Ascending aorta (tissue), 2 donors: ENCODE measurements at regions of chr6 and their contacts with region 1.

Region 1: DNA sequence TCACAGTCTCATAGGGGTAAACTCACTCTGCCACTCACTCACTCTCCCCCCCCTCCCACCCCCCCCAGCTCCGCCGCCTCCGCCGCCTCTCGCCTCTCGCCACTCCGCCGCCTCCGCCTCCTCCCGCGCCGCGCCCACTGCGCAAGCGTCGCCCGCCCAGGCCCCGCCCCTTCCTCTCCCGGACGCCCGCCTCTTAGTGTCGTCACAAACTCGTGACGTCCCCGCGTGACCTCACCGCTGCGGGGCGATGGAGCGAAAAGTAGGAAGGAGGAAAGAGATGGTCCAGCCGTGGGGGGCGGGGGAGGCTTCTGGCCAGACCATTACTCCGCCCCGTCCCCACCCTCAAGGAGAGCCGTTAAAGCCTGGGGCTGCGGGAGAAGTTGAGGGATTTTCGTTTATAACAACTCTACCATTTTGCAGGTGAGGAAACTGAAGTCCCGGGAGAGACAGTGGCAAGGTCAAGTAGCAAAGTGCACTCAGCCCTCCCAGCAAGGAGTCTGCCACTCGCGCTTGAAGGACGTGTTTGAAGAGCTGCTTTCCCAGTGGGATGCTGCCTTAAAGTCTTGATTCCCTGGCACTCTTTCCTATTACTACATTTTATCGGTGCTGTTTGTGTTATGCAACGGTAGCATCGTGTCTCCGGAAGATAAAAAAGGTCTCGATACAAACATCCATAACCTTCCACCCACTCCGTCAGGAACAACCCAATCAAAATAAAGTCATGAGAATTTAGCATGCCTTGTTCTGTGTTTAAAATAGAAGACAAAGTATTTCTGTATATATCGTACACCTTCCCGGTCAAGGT is at the start of gene ILRUN:
- DNase-seq: peak; percentile 89 to 98
- H3K4me3 ChIP-seq: peak within 1 kb of the TSS; percentile 76 to 82
- H3K27ac ChIP-seq: peak within 1 kb of the TSS; percentile 86 to 88
- H3K4me1 ChIP-seq: peaks cover 10 to 18% of the 10 kb centered on the region in 2 donors
- H3K27me3 ChIP-seq: no peaks in the 10 kb centered on the region
- CTCF ChIP-seq: no peak
- total RNA-seq, gene ILRUN: 69.6 TPM

Region 2: GRCh38 chr6:34236131-34236996 is 460.6 kb before region 1 on chr6 and contains the start of gene HMGA1:
- intact Hi-C with region 1: loop called (anchors 10 kb)
- DNase-seq: peak; percentile 72 to 92
- H3K4me3 ChIP-seq: peak within 1 kb of the TSS; percentile 67 to 71
- H3K27ac ChIP-seq: peak within 1 kb of the TSS; percentile 80 to 90
- H3K4me1 ChIP-seq: peaks cover 10 to 12% of the 10 kb centered on the region in 2 donors
- H3K27me3 ChIP-seq: no peaks in the 10 kb centered on the region
- CTCF ChIP-seq: no peak
- total RNA-seq, gene HMGA1: 21.4 TPM

Region 3: GRCh38 chr6:34412643-34413214 is 284.2 kb before region 1 on chr6:
- intact Hi-C with region 1: no loop called
- DNase-seq: no peak
- H3K4me3 ChIP-seq: no peak overlapping the region
- H3K27ac ChIP-seq: no peak overlapping the region
- H3K4me1 ChIP-seq: peaks cover 4 to 8% of the 10 kb centered on the region in 2 donors
- H3K27me3 ChIP-seq: no peaks in the 10 kb centered on the region
- CTCF ChIP-seq: no peak

Region 4: GRCh38 chr6:34610819-34611477 is 86.0 kb before region 1 on chr6:
- intact Hi-C with region 1: loop called (anchors 5 kb)
- DNase-seq: no peak
- H3K4me3 ChIP-seq: no peak overlapping the region
- H3K27ac ChIP-seq: peak overlapping the region; percentile 4 to 54
- H3K4me1 ChIP-seq: peaks cover 0 to 4% of the 10 kb centered on the region in 2 donors
- H3K27me3 ChIP-seq: no peaks in the 10 kb centered on the region
- CTCF ChIP-seq: no peak

Region 5: DNA sequence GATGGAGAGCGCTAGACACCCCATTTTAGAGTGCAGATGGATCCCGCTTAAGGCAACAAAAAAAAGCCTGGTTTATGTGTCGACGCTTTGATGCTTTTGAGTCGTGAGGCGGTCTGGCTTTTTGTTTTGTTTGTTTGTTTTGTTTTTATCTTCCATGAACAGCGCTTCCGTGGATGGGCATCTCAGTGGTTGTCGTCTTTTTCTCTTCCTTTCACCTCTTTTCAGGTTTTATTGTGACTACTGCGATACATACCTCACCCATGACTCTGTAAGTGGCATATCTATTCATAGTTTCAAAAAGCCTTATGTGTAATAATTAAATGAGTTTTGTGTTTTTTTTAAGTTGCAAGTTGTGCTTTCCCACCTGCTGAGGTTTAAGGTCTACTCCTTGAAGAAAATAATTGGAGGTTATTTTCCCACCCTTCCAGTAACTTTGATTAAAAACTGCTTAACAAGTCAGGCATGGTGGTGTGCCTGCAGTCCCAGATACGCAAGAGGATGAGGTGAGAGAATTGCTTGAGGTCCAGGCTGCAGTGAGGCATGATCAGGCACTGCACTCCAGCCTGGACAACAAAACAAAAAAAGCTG is 60.8 kb after region 1 on chr6:
- intact Hi-C with region 1: loop called (anchors 1 kb)
- DNase-seq: no peak
- H3K4me3 ChIP-seq: peak overlapping the region; percentile 84 to 87
- H3K27ac ChIP-seq: peak overlapping the region; percentile 88 to 92
- H3K4me1 ChIP-seq: peaks cover 3 to 7% of the 10 kb centered on the region in 2 donors
- H3K27me3 ChIP-seq: no peaks in the 10 kb centered on the region
- CTCF ChIP-seq: no peak